Caco-2 (cell line): ENCODE measurements at regions of chr12 and their contacts with region 1.

Region 1: GRCh38 chr12:7844116-7844515 is 28.6 kb downstream of the SLC2A14 start:
- DNase-seq: no peak
- H3K4me3 ChIP-seq: no peak overlapping the region
- H3K4me3 Mint-ChIP-seq: peak overlapping the region; percentile 70
- H3K27ac Mint-ChIP-seq: peak overlapping the region; percentile 24
- H3K4me1 ChIP-seq: peaks cover 59% of the 10 kb centered on the region
- H3K4me1 Mint-ChIP-seq: peaks cover 30% of the 10 kb centered on the region
- H3K27me3 ChIP-seq: no peaks in the 10 kb centered on the region
- H3K27me3 Mint-ChIP-seq: no peaks in the 10 kb centered on the region
- CTCF ChIP-seq: no peak

Region 2: GRCh38 chr12:7948589-7949260 is 104.6 kb after region 1 on chr12:
- CTCF ChIA-PET with region 1: no interaction called
- POLR2A ChIA-PET with region 1: no interaction called
- intact Hi-C with region 1: no loop called
- DNase-seq: no peak
- H3K4me3 ChIP-seq: no peak overlapping the region
- H3K4me3 Mint-ChIP-seq: peak overlapping the region; percentile 13
- H3K27ac Mint-ChIP-seq: peak overlapping the region; percentile 18
- H3K4me1 ChIP-seq: peaks cover 22% of the 10 kb centered on the region
- H3K4me1 Mint-ChIP-seq: peaks cover 18% of the 10 kb centered on the region
- H3K27me3 ChIP-seq: no peaks in the 10 kb centered on the region
- H3K27me3 Mint-ChIP-seq: no peaks in the 10 kb centered on the region
- CTCF ChIP-seq: no peak

Region 3: DNA sequence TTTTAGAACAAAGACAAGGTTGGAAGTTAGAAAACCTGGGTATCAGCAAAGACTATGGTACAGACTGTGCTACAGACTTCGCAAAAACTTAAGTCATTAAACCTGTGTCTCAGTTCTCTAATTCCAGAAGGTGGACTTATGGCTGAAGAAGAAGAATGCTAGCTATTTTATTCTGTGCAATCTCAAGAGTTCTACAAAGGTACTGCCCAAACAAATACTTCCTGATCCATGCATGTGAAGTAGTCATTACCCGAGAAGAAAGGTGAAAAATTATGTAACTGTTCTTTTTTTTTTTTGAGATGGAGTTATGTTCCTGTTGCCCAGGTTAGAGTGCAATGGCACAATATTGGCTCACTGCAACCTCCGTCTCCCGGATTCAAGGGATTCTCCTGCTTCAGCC is 137.3 kb after region 1 on chr12:
- CTCF ChIA-PET with region 1: no interaction called
- POLR2A ChIA-PET with region 1: interaction called, 13 read pairs
- intact Hi-C with region 1: no loop called
- DNase-seq: peak; percentile 67 to 68
- H3K4me3 ChIP-seq: no peak overlapping the region
- H3K4me3 Mint-ChIP-seq: peak overlapping the region; percentile 49
- H3K27ac Mint-ChIP-seq: peak overlapping the region; percentile 93
- H3K4me1 ChIP-seq: peaks cover 78% of the 10 kb centered on the region
- H3K4me1 Mint-ChIP-seq: peaks cover 69% of the 10 kb centered on the region
- H3K27me3 ChIP-seq: no peaks in the 10 kb centered on the region
- H3K27me3 Mint-ChIP-seq: no peaks in the 10 kb centered on the region
- CTCF ChIP-seq: no peak